ENCODE measurements at regions of chr14 and their contacts with region 1.

Region 1: GRCh38 chr14:90697577-90698206 is 118.5 kb downstream of the TTC7B start:
- DNase-seq: peak; percentile 61
- ATAC-seq: peak; percentile 95
- H3K4me3 ChIP-seq: no peak overlapping the region
- H3K27ac ChIP-seq: no peak overlapping the region
- H3K4me1 ChIP-seq: no peaks in the 10 kb centered on the region
- H3K27me3 ChIP-seq: no peaks in the 10 kb centered on the region
- CTCF ChIP-seq: peak; percentile 93
- EP300 ChIP-seq: no peak
- POLR2A ChIP-seq: no peak
- RAD21 ChIP-seq: peak; percentile 89

Region 2: GRCh38 chr14:89947344-89947743 is 750.3 kb before region 1 on chr14:
- CTCF ChIA-PET with region 1: no interaction called
- POLR2A ChIA-PET with region 1: no interaction called
- in situ Hi-C with region 1: no loop called
- intact Hi-C with region 1: no loop called
- DNase-seq: no peak
- ATAC-seq: no peak
- H3K4me3 ChIP-seq: no peak overlapping the region
- H3K27ac ChIP-seq: no peak overlapping the region
- H3K4me1 ChIP-seq: no peaks in the 10 kb centered on the region
- H3K27me3 ChIP-seq: no peaks in the 10 kb centered on the region
- CTCF ChIP-seq: no peak
- EP300 ChIP-seq: no peak
- POLR2A ChIP-seq: no peak
- RAD21 ChIP-seq: no peak

Region 3: GRCh38 chr14:90288651-90289355 is 408.9 kb before region 1 on chr14:
- CTCF ChIA-PET with region 1: no interaction called
- POLR2A ChIA-PET with region 1: no interaction called
- in situ Hi-C with region 1: no loop called
- intact Hi-C with region 1: loop called (anchors 1 kb)
- DNase-seq: peak; percentile 3
- ATAC-seq: peak; percentile 86
- H3K4me3 ChIP-seq: no peak overlapping the region
- H3K27ac ChIP-seq: no peak overlapping the region
- H3K4me1 ChIP-seq: no peaks in the 10 kb centered on the region; the same call in 1 of the 2 replicates
- H3K27me3 ChIP-seq: no peaks in the 10 kb centered on the region
- CTCF ChIP-seq: no peak
- EP300 ChIP-seq: no peak
- POLR2A ChIP-seq: no peak
- RAD21 ChIP-seq: no peak

Region 4: DNA sequence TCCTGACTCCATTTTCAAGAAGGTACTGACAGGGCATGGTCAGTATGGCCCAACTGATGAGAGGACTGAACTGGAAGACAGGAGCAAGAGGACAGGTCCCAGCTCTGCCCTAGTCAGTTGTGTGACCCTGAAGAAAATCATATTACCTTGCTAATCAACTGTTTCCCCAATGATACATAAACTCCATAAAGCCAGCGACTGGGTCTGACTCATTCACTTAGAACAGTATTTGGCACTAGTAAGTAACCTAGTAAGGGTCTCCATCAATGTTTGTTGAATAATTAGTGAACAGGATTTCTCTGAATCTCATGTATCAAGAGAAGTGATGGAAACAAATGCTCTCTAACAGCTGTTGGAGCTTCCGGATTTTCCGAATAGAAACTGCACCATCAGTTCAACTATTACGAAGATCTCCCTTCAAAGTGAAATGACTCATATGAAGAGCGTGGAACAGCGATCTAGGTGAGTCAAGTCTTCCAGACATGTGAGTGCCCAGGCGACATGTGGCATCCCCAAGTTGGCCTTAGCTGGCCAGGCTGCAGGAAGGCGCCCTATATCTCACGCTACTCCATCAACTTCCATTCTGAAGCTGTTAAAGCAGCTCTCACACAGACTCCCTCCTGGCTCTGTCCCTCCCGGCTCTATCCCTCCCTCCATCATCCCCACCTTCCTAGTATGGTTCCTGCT is 24.1 kb after region 1 on chr14:
- CTCF ChIA-PET with region 1: no interaction called
- POLR2A ChIA-PET with region 1: no interaction called
- in situ Hi-C with region 1: no loop called
- intact Hi-C with region 1: no loop called
- DNase-seq: no peak
- ATAC-seq: no peak
- H3K4me3 ChIP-seq: no peak overlapping the region
- H3K27ac ChIP-seq: no peak overlapping the region
- H3K4me1 ChIP-seq: no peaks in the 10 kb centered on the region
- H3K27me3 ChIP-seq: no peaks in the 10 kb centered on the region
- CTCF ChIP-seq: no peak
- EP300 ChIP-seq: no peak
- POLR2A ChIP-seq: no peak
- RAD21 ChIP-seq: no peak